Activated CD4-positive, alpha-beta T cell treated with anti-CD3 and anti-CD28 coated beads for 36 hours (primary cell): ENCODE measurements at regions of chr4 and their contacts with region 1.

Region 1: DNA sequence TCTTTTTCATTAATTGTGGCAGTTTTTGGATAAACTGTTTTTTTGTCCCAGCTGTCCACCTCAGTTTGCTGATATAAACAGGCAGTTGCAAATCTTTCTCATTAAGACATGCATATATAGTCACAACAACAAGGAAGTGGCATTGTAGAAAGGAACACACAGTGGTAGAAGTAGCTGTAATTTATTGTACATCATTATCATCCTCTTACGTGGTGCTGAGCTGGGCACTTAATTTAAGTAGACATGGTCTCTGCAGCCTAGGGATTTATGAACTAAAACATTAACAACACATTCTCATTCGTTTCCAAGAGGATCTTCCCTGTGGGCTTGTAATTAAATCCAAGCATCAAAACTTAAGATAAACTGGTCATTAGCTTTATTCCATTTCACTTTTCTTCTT is 500.2 kb downstream of the INPP4B start:
- DNase-seq: no peak
- ATAC-seq: no peak
- H3K4me3 Mint-ChIP-seq: peak overlapping the region; percentile 10
- H3K27ac Mint-ChIP-seq: peak overlapping the region; percentile 58
- H3K4me1 Mint-ChIP-seq: peaks cover 84% of the 10 kb centered on the region
- H3K27me3 Mint-ChIP-seq: no peaks in the 10 kb centered on the region

Region 2: DNA sequence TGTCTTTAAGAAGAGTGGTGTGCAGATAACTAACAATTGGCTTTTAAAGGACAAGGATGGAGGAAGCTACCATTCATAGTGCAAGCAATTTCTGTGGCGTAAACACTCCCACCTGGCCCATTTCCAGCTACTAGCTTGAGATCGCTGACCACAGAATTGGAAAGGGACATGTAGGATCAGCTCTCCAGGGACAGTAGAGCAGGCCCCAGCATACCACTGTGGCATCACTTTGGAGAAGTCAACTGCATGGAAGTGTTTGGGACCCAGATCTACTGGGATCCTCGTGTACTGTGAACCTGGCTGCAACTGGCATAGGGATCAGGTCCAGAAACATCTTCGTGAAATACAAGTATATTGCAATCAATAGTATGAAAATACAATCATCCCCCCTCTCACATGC is 14.8 kb before region 1 on chr4:
- CTCF ChIA-PET with region 1: interaction called, 18 read pairs
- POLR2A ChIA-PET with region 1: no interaction called
- intact Hi-C with region 1: no loop called
- DNase-seq: no peak
- ATAC-seq: no peak
- H3K4me3 Mint-ChIP-seq: no peak overlapping the region
- H3K27ac Mint-ChIP-seq: no peak overlapping the region
- H3K4me1 Mint-ChIP-seq: peaks cover 64% of the 10 kb centered on the region
- H3K27me3 Mint-ChIP-seq: no peaks in the 10 kb centered on the region